Activated CD8-positive, alpha-beta T cell treated with anti-CD3 and anti-CD28 coated beads, Interleukin-2, amount 10 ng/mL, durations not matched to agents 7 days and 5 days (primary cell): ENCODE measurements at regions of chr6 and their contacts with region 1.

Region 1: DNA sequence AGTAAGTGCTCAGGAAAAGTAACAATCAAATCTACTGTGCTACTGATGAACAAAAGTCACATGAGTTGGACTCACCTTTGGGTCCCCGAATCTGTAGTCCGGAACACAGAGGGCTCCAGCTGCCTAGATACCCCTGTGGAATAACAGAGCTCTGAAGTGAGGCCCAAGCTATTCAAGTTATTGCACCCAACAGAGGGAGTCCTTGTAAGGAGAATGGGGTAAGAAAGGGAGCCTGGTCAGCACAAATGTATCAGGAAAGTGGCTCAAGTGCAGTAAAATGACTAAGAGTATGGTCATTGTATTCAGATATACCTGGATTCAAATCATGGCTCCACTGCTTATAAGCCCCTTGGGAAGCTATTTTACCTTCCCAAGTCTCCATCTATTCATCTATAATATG is 20.9 kb downstream of the EDN1 start:
- DNase-seq: no peak
- ATAC-seq: no peak
- H3K4me3 Mint-ChIP-seq: no peak overlapping the region
- H3K27ac Mint-ChIP-seq: no peak overlapping the region
- H3K4me1 Mint-ChIP-seq: no peaks in the 10 kb centered on the region
- H3K27me3 Mint-ChIP-seq: peaks cover 6% of the 10 kb centered on the region

Region 2: DNA sequence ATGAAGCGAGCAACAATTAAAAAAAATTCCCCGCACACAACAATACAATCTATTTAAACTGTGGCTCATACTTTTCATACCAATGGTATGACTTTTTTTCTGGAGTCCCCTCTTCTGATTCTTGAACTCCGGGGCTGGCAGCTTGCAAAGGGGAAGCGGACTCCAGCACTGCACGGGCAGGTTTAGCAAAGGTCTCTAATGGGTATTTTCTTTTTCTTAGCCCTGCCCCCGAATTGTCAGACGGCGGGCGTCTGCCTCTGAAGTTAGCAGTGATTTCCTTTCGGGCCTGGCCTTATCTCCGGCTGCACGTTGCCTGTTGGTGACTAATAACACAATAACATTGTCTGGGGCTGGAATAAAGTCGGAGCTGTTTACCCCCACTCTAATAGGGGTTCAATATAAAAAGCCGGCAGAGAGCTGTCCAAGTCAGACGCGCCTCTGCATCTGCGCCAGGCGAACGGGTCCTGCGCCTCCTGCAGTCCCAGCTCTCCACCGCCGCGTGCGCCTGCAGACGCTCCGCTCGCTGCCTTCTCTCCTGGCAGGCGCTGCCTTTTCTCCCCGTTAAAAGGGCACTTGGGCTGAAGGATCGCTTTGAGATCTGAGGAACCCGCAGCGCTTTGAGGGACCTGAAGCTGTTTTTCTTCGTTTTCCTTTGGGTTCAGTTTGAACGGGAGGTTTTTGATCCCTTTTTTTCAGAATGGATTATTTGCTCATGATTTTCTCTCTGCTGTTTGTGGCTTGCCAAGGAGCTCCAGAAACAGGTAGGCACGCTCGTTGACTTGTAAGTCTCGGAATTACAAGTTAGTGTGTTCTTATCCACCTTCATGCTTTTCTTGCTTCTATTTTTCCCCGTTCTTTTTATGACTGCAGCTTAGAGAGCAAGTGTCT is 20.9 kb before region 1 on chr6 and contains the start of gene EDN1:
- CTCF ChIA-PET with region 1: interaction called, 16 read pairs
- POLR2A ChIA-PET with region 1: no interaction called
- DNase-seq: peak; percentile 65
- ATAC-seq: peak; percentile 93
- H3K4me3 Mint-ChIP-seq: peak within 1 kb of the TSS; percentile 72
- H3K27ac Mint-ChIP-seq: no peak within 1 kb of the TSS
- H3K4me1 Mint-ChIP-seq: peaks cover 15% of the 10 kb centered on the region
- H3K27me3 Mint-ChIP-seq: peaks cover 37% of the 10 kb centered on the region
- total RNA-seq, gene EDN1: not detected